Calu3 (cell line): ENCODE measurements at regions of chr18 and their contacts with region 1.

Region 1: GRCh38 chr18:73060666-73061270 is 193.0 kb upstream of the NETO1 start:
- DNase-seq: no peak
- H3K4me3 Mint-ChIP-seq: no peak overlapping the region
- H3K27ac Mint-ChIP-seq: no peak overlapping the region
- H3K4me1 Mint-ChIP-seq: peaks cover 9% of the 10 kb centered on the region
- H3K27me3 Mint-ChIP-seq: no peaks in the 10 kb centered on the region
- CTCF ChIP-seq: no peak

Region 2: GRCh38 chr18:73035344-73035743 is 25.4 kb before region 1 on chr18:
- CTCF ChIA-PET with region 1: no interaction called
- intact Hi-C with region 1: loop called (anchors 1 kb)
- DNase-seq: no peak
- H3K4me3 Mint-ChIP-seq: no peak overlapping the region
- H3K27ac Mint-ChIP-seq: no peak overlapping the region
- H3K4me1 Mint-ChIP-seq: peaks cover 6% of the 10 kb centered on the region
- H3K27me3 Mint-ChIP-seq: no peaks in the 10 kb centered on the region
- CTCF ChIP-seq: no peak